ENCODE measurements at regions of chr15 and their contacts with region 1.

Region 1: DNA sequence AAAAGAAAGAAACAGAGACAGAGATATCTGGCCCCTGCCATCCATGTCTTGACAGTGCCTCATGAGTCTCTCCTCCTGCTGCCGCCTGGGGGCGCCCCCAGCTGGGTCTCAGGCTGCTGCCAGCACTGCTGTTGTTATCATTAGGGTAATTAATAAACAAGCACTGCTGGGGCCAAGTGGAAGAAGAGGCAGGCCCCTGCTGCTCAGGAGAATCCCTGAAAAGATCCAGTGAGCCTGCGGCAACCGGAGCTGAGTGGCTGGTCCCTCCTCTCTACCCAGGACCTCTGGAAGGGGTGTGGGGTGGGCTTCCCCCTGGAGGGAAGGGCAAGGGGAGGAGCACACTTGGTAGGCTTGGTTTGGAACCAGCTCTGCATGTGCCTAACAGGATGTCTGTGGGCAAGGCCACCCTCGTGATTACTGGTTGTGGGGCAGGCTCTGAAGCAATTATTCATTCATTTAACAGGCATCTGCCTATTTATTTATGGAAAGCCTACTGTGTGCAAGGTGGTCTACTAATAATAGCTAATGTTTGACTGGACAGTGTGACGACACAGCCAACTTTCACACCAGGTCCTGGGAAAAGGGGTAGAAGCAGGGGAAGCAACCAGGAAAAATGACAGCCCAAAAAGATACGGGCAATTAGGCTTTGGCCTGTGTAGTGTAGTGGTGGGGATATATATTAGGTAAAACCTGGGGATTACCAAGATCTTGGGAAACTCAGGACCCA is 1.2 kb upstream of the TYRO3 start:
- DNase-seq: peak; percentile 79
- H3K4me3 Mint-ChIP-seq: peak overlapping the region; percentile 87
- H3K27ac Mint-ChIP-seq: no peak overlapping the region
- H3K4me1 Mint-ChIP-seq: peaks cover 13% of the 10 kb centered on the region
- H3K27me3 Mint-ChIP-seq: peaks cover 15% of the 10 kb centered on the region

Region 2: GRCh38 chr15:41387646-41388045 is 170.2 kb before region 1 on chr15:
- CTCF ChIA-PET with region 1: no interaction called
- intact Hi-C with region 1: no loop called
- DNase-seq: no peak
- H3K4me3 Mint-ChIP-seq: no peak overlapping the region
- H3K27ac Mint-ChIP-seq: no peak overlapping the region
- H3K4me1 Mint-ChIP-seq: peaks cover 3% of the 10 kb centered on the region
- H3K27me3 Mint-ChIP-seq: no peaks in the 10 kb centered on the region

Region 3: GRCh38 chr15:41523097-41523496 is 34.7 kb before region 1 on chr15:
- CTCF ChIA-PET with region 1: no interaction called
- intact Hi-C with region 1: no loop called
- DNase-seq: no peak
- H3K4me3 Mint-ChIP-seq: no peak overlapping the region
- H3K27ac Mint-ChIP-seq: no peak overlapping the region
- H3K4me1 Mint-ChIP-seq: no peaks in the 10 kb centered on the region
- H3K27me3 Mint-ChIP-seq: no peaks in the 10 kb centered on the region

Region 4: GRCh38 chr15:41544650-41545015 is 13.2 kb before region 1 on chr15:
- CTCF ChIA-PET with region 1: interaction called, 6 read pairs
- intact Hi-C with region 1: loop called (anchors 1 kb)
- DNase-seq: no peak
- H3K4me3 Mint-ChIP-seq: peak overlapping the region; percentile 95
- H3K27ac Mint-ChIP-seq: peak overlapping the region; percentile 71
- H3K4me1 Mint-ChIP-seq: peaks cover 13% of the 10 kb centered on the region
- H3K27me3 Mint-ChIP-seq: no peaks in the 10 kb centered on the region

Region 5: GRCh38 chr15:41621200-41622193 is 63.7 kb after region 1 on chr15:
- CTCF ChIA-PET with region 1: no interaction called
- intact Hi-C with region 1: loop called (anchors 5 kb)
- DNase-seq: peak; percentile 84
- H3K4me3 Mint-ChIP-seq: peak overlapping the region; percentile 73
- H3K27ac Mint-ChIP-seq: no peak overlapping the region
- H3K4me1 Mint-ChIP-seq: peaks cover 9% of the 10 kb centered on the region
- H3K27me3 Mint-ChIP-seq: no peaks in the 10 kb centered on the region

Region 6: DNA sequence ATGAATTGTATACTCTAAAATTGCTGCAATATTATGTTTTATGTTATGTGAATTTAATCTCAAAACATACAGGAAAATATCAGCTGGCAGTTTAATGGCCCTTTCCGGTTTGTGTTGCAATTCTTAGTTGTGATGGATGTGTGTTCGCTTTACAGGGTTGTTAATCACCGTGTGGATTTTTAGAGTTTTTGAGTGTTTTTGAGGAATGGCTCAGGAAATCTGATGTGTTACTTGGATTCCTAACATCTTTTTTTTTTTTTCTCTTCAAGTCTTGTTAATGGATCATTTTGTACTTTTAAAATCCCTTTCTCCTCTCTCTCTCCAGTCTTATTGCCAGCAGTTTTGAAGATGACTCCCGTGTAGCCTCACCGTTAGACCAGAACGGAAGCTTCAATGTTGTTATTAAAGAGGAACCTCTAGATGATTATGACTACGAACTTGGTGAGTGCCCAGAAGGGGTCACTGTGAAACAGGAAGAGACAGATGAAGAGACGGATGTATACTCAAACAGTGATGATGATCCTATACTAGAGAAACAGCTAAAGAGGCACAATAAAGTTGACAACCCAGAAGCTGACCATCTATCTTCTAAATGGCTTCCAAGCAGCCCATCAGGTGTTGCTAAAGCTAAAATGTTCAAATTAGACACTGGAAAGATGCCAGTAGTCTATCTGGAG is 138.1 kb after region 1 on chr15:
- CTCF ChIA-PET with region 1: interaction called, 3 read pairs
- intact Hi-C with region 1: loop called (anchors 1 kb)
- DNase-seq: peak; percentile 78
- H3K4me3 Mint-ChIP-seq: peak overlapping the region; percentile 22
- H3K27ac Mint-ChIP-seq: peak overlapping the region; percentile 76
- H3K4me1 Mint-ChIP-seq: peaks cover 48% of the 10 kb centered on the region
- H3K27me3 Mint-ChIP-seq: no peaks in the 10 kb centered on the region

Region 7: DNA sequence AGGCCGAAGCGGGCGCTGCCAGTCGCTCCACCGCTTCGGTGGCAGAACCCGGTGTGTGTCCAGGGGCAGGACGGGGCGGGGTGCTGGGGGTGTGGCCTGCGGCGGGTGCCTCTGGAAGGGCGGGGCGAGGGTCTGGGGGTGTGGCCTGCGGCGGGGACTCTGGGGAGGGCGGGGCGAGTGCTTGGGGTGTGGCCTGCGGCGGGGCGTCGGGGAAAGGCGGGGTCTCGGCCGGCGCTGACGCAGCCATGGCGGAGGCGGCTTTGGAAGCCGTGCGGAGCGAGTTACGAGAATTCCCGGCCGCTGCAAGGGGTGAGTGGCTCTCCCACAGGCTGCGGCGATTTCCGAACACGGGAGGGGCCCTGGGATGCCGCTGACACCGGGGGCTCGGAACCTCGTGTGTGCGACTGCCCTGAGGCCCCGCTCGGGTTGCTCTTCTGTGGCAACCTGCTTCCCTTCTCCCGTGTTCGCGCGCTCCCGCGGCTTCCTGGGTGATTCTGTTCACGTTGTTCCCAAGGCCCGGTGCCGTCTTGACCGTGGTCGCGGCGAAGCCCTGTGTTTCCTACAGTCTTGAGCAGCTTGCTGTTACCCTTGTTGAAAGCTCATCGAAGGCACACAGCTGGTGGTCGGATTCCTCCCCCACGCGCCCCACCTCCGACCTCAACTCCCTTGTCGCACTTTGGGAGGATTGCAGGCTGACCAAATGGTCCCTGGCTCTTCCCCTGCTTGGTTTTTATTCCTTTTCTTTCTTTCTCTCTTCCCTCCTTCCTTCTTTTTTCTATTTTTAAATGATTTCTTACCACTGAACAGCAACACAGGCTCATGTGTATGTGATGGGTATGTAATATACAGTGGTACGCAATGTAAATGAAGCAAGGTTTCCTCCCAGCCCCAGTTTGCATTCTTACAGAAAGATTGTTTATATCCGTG is 270.3 kb after region 1 on chr15 and contains the start of gene JMJD7:
- CTCF ChIA-PET with region 1: interaction called, 3 read pairs
- intact Hi-C with region 1: loop called (anchors 5 kb)
- DNase-seq: peak; percentile 97
- H3K4me3 Mint-ChIP-seq: peak within 1 kb of the TSS; percentile 82
- H3K27ac Mint-ChIP-seq: peak within 1 kb of the TSS; percentile 59
- H3K4me1 Mint-ChIP-seq: peaks cover 42% of the 10 kb centered on the region
- H3K27me3 Mint-ChIP-seq: no peaks in the 10 kb centered on the region
- total RNA-seq, gene JMJD7: 18.7 to 19.8 TPM

Region 8: GRCh38 chr15:41892621-41893421 is 335.0 kb after region 1 on chr15:
- CTCF ChIA-PET with region 1: no interaction called
- intact Hi-C with region 1: no loop called
- DNase-seq: peak; percentile 26
- H3K4me3 Mint-ChIP-seq: peak overlapping the region; percentile 29
- H3K27ac Mint-ChIP-seq: peak overlapping the region; percentile 63
- H3K4me1 Mint-ChIP-seq: peaks cover 42% of the 10 kb centered on the region
- H3K27me3 Mint-ChIP-seq: no peaks in the 10 kb centered on the region

Region 9: DNA sequence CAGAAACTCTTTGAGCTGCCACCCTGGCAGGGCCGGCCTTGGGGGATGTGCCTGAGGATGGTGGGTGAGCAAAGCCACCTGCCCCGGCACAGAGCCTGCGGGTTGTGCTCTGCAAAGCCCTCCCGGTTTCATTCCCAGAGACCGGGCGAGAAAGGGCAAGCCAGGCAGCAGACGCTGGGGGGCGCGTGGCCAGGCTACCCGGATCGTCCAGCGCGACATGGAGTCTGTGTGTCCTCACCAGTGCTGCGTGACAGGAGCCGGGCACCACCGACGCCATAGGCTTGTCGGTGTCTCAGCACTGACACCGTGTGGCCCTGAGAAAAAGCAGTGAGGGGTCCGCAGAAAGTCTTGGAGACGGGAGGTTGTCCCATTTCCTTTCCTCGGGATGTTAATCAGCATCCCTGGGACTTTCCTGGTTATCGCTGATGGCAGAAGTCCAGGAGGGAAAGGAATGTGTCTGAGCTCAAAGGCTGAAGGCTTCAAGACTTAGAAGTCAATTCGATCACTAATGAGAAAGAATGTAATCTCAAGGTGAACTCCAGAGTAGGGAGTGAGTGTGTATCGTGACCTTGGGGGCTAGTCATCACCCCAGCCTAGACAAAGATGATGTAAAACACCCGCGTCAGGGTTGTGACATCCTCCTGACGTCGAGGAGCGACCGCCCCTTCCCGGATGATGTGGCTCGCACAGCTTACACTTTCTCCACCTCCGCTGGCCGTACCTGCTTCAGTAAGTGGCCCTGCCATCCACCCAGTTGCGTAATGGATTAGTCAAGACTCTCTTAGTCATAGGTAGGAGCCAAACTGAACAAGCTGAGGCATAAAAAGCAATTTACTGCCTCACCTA is 499.3 kb after region 1 on chr15:
- CTCF ChIA-PET with region 1: no interaction called
- intact Hi-C with region 1: loop called (anchors 1 kb)
- DNase-seq: peak; percentile 73
- H3K4me3 Mint-ChIP-seq: peak overlapping the region; percentile 33
- H3K27ac Mint-ChIP-seq: no peak overlapping the region
- H3K4me1 Mint-ChIP-seq: peaks cover 13% of the 10 kb centered on the region
- H3K27me3 Mint-ChIP-seq: peaks cover 20% of the 10 kb centered on the region

Measured in activated naive CD4-positive, alpha-beta T cell treated with anti-CD3 and anti-CD28 coated beads for 36 hours (primary cell).